Activated CD8-positive, alpha-beta T cell treated with anti-CD3 and anti-CD28 coated beads for 36 hours (primary cell): ENCODE measurements at regions of chr2 and their contacts with region 1.

Region 1: GRCh38 chr2:68909793-68910674 is 38.8 kb upstream of the BMP10 start:
- DNase-seq: peak; percentile 92
- ATAC-seq: peak; percentile 45
- H3K4me3 Mint-ChIP-seq: no peak overlapping the region
- H3K27ac Mint-ChIP-seq: peak overlapping the region; percentile 60
- H3K4me1 Mint-ChIP-seq: peaks cover 35% of the 10 kb centered on the region
- H3K27me3 Mint-ChIP-seq: no peaks in the 10 kb centered on the region
- CTCF ChIP-seq: peak; percentile 91

Region 2: DNA sequence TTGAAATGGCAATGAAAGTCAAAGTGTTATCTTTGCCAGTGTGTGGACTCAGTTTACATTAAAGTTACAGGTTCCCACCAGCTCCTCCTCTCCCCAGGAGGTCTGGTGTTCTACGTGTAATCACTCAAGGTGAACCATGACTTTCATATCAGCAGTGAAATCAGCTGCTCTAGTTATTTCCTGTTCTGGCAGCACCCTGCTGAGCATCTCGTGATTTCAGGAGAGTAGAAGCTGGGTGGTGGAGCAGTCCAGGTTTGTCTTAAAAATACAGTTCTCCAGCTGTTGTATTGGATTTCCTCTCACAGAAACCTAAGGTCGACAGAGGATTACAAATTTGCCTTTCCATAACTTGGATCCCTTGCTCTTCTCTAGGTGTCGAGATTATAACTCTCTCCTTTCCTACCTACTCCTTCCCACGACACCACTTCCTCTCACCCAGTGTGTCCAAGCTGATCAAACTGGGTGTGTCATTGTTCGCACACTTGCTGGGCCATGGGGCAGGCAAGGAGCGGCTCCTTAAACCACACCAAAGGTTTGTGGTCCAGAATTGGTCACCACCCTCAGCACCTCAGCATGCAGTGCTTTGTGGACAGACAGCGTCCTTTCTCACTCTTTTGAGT is 188.4 kb before region 1 on chr2:
- CTCF ChIA-PET with region 1: interaction called, 23 read pairs
- POLR2A ChIA-PET with region 1: interaction called, 3 read pairs
- intact Hi-C with region 1: no loop called
- DNase-seq: peak; percentile 53
- ATAC-seq: peak; percentile 33
- H3K4me3 Mint-ChIP-seq: peak overlapping the region; percentile 50
- H3K27ac Mint-ChIP-seq: peak overlapping the region; percentile 87
- H3K4me1 Mint-ChIP-seq: peaks cover 77% of the 10 kb centered on the region
- H3K27me3 Mint-ChIP-seq: no peaks in the 10 kb centered on the region
- CTCF ChIP-seq: no peak

Region 3: GRCh38 chr2:68742626-68743415 is 167.2 kb before region 1 on chr2:
- CTCF ChIA-PET with region 1: interaction called, 37 read pairs
- POLR2A ChIA-PET with region 1: interaction called, 8 read pairs
- intact Hi-C with region 1: loop called (anchors 5 kb)
- DNase-seq: no peak
- ATAC-seq: no peak
- H3K4me3 Mint-ChIP-seq: peak overlapping the region; percentile 2
- H3K27ac Mint-ChIP-seq: peak overlapping the region; percentile 81
- H3K4me1 Mint-ChIP-seq: peaks cover 89% of the 10 kb centered on the region
- H3K27me3 Mint-ChIP-seq: no peaks in the 10 kb centered on the region
- CTCF ChIP-seq: no peak

Region 4: GRCh38 chr2:68837164-68837860 is 72.7 kb before region 1 on chr2:
- CTCF ChIA-PET with region 1: interaction called, 13 read pairs
- POLR2A ChIA-PET with region 1: interaction called, 3 read pairs
- intact Hi-C with region 1: loop called (anchors 5 kb)
- DNase-seq: peak; percentile 85
- ATAC-seq: peak; percentile 55
- H3K4me3 Mint-ChIP-seq: no peak overlapping the region
- H3K27ac Mint-ChIP-seq: peak overlapping the region; percentile 43
- H3K4me1 Mint-ChIP-seq: peaks cover 37% of the 10 kb centered on the region
- H3K27me3 Mint-ChIP-seq: no peaks in the 10 kb centered on the region
- CTCF ChIP-seq: peak; percentile 84